ENCODE measurements at regions of chr3 and their contacts with region 1.

Region 1: DNA sequence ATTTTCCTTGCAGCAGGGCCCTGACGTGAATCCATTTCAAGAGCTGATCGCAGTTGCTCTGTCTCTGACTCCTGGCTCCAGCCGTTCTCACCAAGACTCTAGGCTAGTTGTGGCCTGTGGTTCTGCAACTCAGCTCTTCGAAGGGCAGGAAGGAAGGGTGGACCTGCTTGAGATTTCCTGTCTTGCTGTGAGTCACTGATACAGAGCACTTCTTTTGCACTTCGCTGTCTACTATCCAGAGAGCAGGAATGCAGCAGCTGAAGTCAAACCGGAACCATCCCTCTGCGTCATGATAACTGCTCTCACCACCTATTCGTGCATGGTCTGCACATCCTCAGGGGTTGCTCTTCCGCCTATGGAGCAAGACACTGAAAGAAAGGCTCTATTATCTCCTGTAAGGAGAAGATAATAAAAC is 59.7 kb downstream of the RAP2B start:
- DNase-seq: peak; percentile 96
- H3K4me3 ChIP-seq: peak overlapping the region; percentile 18; the same call in 1 of the 2 replicates
- CTCF ChIP-seq: no peak

Region 2: GRCh38 chr3:153232910-153233271 is 11.1 kb after region 1 on chr3:
- CTCF ChIA-PET with region 1: interaction called, 6 read pairs
- POLR2A ChIA-PET with region 1: interaction called, 11 read pairs
- DNase-seq: peak; percentile 65
- H3K4me3 ChIP-seq: no peak overlapping the region
- CTCF ChIP-seq: no peak